Naive thymus-derived CD4-positive, alpha-beta T cell (primary cell): ENCODE measurements at regions of chr4 and their contacts with region 1.

Region 1: DNA sequence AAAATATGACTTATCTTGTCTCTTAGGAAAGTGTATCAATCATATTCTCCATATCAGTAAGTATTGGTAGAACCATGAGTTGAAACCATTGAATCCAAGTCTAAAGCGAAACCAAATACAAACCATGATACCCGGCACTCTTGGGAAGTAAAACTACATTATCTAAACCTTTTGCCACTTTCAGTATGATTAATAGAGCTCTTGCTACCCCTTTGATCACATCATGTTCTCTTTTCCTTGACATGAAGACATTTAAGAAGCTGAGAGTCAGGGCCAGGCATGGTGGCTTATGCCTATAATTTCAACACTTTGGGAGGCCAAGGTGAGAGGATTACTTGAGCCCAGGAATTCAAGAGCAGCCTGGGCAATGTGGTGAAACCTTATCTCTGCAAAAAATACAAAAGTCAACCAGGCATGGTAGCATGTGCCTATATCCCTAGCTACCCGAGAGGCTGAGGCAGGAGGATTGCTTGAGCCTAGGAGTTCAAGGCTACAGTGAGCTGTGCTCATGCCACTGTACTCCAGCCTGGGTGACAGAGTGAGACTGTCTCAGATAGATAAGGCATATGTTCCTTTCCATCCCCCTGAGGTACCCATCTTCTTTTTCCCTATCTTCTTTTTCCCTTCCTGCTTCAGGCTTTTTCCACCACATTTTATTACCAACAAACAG is 45.4 kb downstream of the CEP135 start:
- DNase-seq: no peak
- ATAC-seq: no peak
- H3K4me3 ChIP-seq: no peak overlapping the region
- H3K4me3 Mint-ChIP-seq: peak overlapping the region in 1 of 10 donors; percentile 55
- H3K27ac ChIP-seq: no peak overlapping the region
- H3K27ac Mint-ChIP-seq: peak overlapping the region in 5 of 9 donors; percentile 17 to 62 (median 60)
- H3K4me1 ChIP-seq: no peaks in the 10 kb centered on the region
- H3K4me1 Mint-ChIP-seq: peaks cover 0 to 19% (median 0%) of the 10 kb centered on the region in 7 donors
- H3K27me3 ChIP-seq: no peaks in the 10 kb centered on the region
- H3K27me3 Mint-ChIP-seq: no peaks in the 10 kb centered on the region

Region 2: GRCh38 chr4:55896622-55897021 is 97.5 kb before region 1 on chr4:
- CTCF ChIA-PET with region 1: no interaction called
- POLR2A ChIA-PET with region 1: no interaction called
- intact Hi-C with region 1: no loop called
- DNase-seq: no peak
- ATAC-seq: no peak
- H3K4me3 ChIP-seq: no peak overlapping the region
- H3K4me3 Mint-ChIP-seq: no peak overlapping the region
- H3K27ac ChIP-seq: no peak overlapping the region
- H3K27ac Mint-ChIP-seq: peak overlapping the region in 1 of 9 donors; percentile 27
- H3K4me1 ChIP-seq: no peaks in the 10 kb centered on the region
- H3K4me1 Mint-ChIP-seq: peaks cover 2 to 16% (median 9%) of the 10 kb centered on the region in 7 donors
- H3K27me3 ChIP-seq: no peaks in the 10 kb centered on the region
- H3K27me3 Mint-ChIP-seq: no peaks in the 10 kb centered on the region

Region 3: GRCh38 chr4:56008206-56008605 is 14.1 kb after region 1 on chr4:
- CTCF ChIA-PET with region 1: no interaction called
- POLR2A ChIA-PET with region 1: no interaction called
- intact Hi-C with region 1: loop called in 1 of 2 experiments (anchors 1 kb)
- DNase-seq: no peak
- ATAC-seq: no peak
- H3K4me3 ChIP-seq: no peak overlapping the region
- H3K4me3 Mint-ChIP-seq: no peak overlapping the region
- H3K27ac ChIP-seq: no peak overlapping the region
- H3K27ac Mint-ChIP-seq: peak overlapping the region in 1 of 9 donors; percentile 28
- H3K4me1 ChIP-seq: no peaks in the 10 kb centered on the region
- H3K4me1 Mint-ChIP-seq: peaks cover 0 to 9% (median 1%) of the 10 kb centered on the region in 7 donors
- H3K27me3 ChIP-seq: no peaks in the 10 kb centered on the region
- H3K27me3 Mint-ChIP-seq: no peaks in the 10 kb centered on the region

Region 4: GRCh38 chr4:56048702-56049431 is 54.7 kb after region 1 on chr4:
- CTCF ChIA-PET with region 1: no interaction called
- POLR2A ChIA-PET with region 1: no interaction called
- intact Hi-C with region 1: loop called in 1 of 2 experiments (anchors 5 kb)
- DNase-seq: peak in 6 of 9 donors; percentile 7 to 72 (median 16)
- ATAC-seq: peak; percentile 85
- H3K4me3 ChIP-seq: no peak overlapping the region
- H3K4me3 Mint-ChIP-seq: peak overlapping the region; percentile 55 to 78 (median 73)
- H3K27ac ChIP-seq: no peak overlapping the region
- H3K27ac Mint-ChIP-seq: no peak overlapping the region
- H3K4me1 ChIP-seq: peaks cover 3 to 6% of the 10 kb centered on the region in 2 donors
- H3K4me1 Mint-ChIP-seq: peaks cover 8 to 18% (median 12%) of the 10 kb centered on the region in 7 donors
- H3K27me3 ChIP-seq: peaks cover 6 to 10% of the 10 kb centered on the region in 2 donors
- H3K27me3 Mint-ChIP-seq: peaks cover 43 to 64% (median 55%) of the 10 kb centered on the region in 5 donors